Mammary epithelial cell (primary cell): ENCODE measurements at regions of chr2 and their contacts with region 1.

Region 1: DNA sequence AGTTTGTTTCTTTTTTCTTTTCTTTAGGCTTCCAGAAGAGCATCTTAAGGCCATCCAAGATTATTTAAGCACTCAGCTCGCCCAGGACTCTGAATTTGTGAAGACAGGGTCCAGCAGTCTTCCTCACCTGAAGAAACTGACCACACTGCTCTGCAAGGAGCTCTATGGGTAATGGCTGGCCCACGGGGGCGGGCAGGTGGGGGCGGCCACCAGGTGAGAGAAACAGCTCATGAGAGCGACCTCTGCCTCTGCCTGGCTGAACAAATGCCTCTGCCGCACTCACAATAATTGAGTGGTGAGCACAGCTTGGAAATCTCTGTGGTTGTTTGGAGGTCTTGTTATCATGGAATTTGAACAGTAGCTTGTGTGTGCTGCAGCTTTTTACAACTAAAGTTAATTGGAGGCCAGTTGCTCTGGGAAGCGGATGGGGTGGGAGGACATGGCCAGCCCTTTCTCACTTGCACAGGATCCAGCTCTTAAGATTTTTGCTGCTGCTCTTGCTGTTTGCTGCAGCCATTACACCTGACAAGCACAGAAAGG is 70.4 kb downstream of the INPP5D start:
- DNase-seq: no peak
- H3K4me3 ChIP-seq: no peak overlapping the region
- H3K27ac ChIP-seq: no peak overlapping the region
- H3K4me1 ChIP-seq: no peaks in the 10 kb centered on the region
- H3K27me3 ChIP-seq: no peaks in the 10 kb centered on the region
- CTCF ChIP-seq: no peak

Region 2: DNA sequence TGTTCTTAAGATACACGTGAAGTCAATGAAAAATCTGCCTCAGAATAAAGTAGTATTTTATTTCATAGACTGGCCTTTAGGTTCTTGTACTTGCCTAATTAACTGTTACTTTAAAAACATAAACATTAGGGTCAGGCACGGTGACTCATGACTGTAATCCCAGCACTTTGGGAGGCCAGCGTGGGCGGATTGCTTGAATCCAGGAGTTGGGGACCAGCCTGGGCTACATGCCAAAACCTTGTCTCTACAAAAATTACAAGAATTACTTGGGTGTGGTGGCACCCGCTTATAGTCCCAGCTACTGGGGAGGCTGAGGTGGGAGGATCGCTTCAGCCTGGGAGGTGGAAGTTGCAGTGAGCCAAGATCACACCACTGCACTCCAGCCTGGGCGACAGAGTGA is 276.5 kb before region 1 on chr2:
- CTCF ChIA-PET with region 1: no interaction called
- dilution Hi-C with region 1: no loop called
- in situ Hi-C with region 1: no loop called
- intact Hi-C with region 1: loop called (anchors 10 kb)
- DNase-seq: peak; percentile 77
- H3K4me3 ChIP-seq: no peak overlapping the region
- H3K27ac ChIP-seq: no peak overlapping the region
- H3K4me1 ChIP-seq: peaks cover 15% of the 10 kb centered on the region
- H3K27me3 ChIP-seq: no peaks in the 10 kb centered on the region
- CTCF ChIP-seq: no peak

Region 3: DNA sequence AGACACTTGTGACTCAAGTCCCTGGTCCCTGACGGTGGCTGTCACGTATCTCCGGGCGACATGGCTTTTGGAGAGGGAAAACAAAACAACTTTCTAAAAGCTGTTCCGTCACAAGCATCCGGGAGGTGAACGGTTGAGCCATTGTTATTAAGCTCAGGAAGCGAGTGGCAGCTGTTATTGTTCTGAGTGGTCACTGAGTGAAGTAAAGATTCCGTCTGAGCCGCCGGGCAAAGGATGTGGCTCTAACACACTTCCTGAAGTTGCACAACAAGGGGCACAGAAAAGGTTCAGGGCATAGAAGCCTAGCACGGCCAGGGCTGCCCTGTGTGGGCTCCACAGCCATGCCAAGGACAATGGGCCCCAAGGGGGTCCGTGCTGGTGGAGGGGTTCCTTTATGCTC is 46.1 kb before region 1 on chr2:
- CTCF ChIA-PET with region 1: no interaction called
- dilution Hi-C with region 1: loop called (anchors 5 kb)
- in situ Hi-C with region 1: no loop called
- intact Hi-C with region 1: no loop called
- DNase-seq: no peak
- H3K4me3 ChIP-seq: no peak overlapping the region
- H3K27ac ChIP-seq: no peak overlapping the region
- H3K4me1 ChIP-seq: no peaks in the 10 kb centered on the region
- H3K27me3 ChIP-seq: peaks cover 3% of the 10 kb centered on the region
- CTCF ChIP-seq: no peak